T-cell (primary cell): ENCODE measurements at regions of chr20 and their contacts with region 1.

Region 1: GRCh38 chr20:22663528-22664025 is 79.2 kb upstream of the FOXA2 start:
- DNase-seq: no peak
- ATAC-seq: no peak
- H3K4me3 ChIP-seq: no peak overlapping the region
- H3K4me3 Mint-ChIP-seq: no peak overlapping the region
- H3K27ac ChIP-seq: no peak overlapping the region
- H3K27ac Mint-ChIP-seq: no peak overlapping the region
- H3K4me1 ChIP-seq: no peaks in the 10 kb centered on the region
- H3K4me1 Mint-ChIP-seq: no peaks in the 10 kb centered on the region
- H3K27me3 ChIP-seq: no peaks in the 10 kb centered on the region
- H3K27me3 Mint-ChIP-seq: peaks cover 0 to 3% of the 10 kb centered on the region in 2 donors

Region 2: DNA sequence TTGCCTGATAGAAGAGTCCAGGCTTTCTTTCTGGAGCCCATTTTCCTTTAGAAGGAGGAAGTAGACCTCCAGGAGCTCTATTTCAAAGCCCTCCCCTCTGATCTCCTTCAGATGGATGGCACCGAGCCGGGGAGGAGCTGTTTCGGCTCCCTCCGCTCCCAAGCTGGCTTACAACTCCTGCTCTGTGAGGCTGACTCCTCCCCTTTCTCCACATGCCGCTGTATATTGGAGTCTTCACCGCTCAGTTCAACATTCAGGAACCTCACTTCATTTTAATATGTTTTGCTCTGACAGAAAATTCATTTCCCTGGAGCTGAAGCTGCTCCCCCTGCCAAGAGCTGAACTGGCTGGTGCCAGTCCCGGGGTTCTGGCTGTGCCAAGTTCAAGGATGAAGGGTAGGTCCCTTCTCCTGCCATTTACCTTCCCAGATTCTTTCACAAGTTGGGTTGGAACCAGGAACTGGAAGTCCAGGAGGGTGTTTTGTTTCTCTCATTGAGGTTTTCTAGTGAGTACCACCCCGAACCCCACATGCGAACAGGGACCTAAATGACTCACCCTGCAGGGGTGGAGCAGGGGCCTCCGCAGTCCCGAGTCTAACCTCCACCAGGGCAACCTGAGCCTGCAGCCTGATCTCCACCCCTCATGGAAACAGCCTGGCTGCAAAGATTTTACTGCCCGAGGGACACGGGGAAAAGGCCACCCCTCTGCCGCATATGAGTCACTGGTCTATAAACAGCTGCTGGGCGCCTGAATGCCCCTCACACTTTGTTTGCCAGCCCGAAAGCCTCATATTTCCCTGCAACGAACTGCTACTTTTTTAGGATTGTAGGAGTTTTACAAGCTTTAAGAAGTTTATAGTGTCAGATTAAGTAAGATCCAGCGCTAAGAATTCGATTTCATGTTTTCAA is 10.6 kb before region 1 on chr20:
- CTCF ChIA-PET with region 1: no interaction called
- POLR2A ChIA-PET with region 1: interaction called in 1 of 2 experiments, 11 read pairs
- DNase-seq: no peak
- ATAC-seq: no peak
- H3K4me3 ChIP-seq: no peak overlapping the region
- H3K4me3 Mint-ChIP-seq: no peak overlapping the region
- H3K27ac ChIP-seq: no peak overlapping the region
- H3K27ac Mint-ChIP-seq: no peak overlapping the region
- H3K4me1 ChIP-seq: no peaks in the 10 kb centered on the region
- H3K4me1 Mint-ChIP-seq: no peaks in the 10 kb centered on the region
- H3K27me3 ChIP-seq: peaks cover 0 to 3% of the 10 kb centered on the region in 2 experiments
- H3K27me3 Mint-ChIP-seq: no peaks in the 10 kb centered on the region